ENCODE measurements at regions of chr13 and their contacts with region 1.

Region 1: GRCh38 chr13:30978981-30979956 is 46.8 kb downstream of the TEX26 start:
- DNase-seq: no peak
- H3K4me3 ChIP-seq: no peak overlapping the region
- H3K27ac ChIP-seq: no peak overlapping the region
- H3K4me1 ChIP-seq: peaks cover 20% of the 10 kb centered on the region
- H3K27me3 ChIP-seq: no peaks in the 10 kb centered on the region
- CTCF ChIP-seq: peak; percentile 38 to 86

Region 2: GRCh38 chr13:30679483-30680330 is 299.6 kb before region 1 on chr13:
- CTCF ChIA-PET with region 1: no interaction called
- dilution Hi-C with region 1: no loop called
- in situ Hi-C with region 1: no loop called
- intact Hi-C with region 1: loop called (anchors 1 kb)
- DNase-seq: no peak
- H3K4me3 ChIP-seq: no peak overlapping the region
- H3K27ac ChIP-seq: no peak overlapping the region
- H3K4me1 ChIP-seq: no peaks in the 10 kb centered on the region
- H3K27me3 ChIP-seq: no peaks in the 10 kb centered on the region
- CTCF ChIP-seq: peak; percentile 47 to 78

Region 3: GRCh38 chr13:30905932-30906383 is 73.3 kb before region 1 on chr13 and contains the start of gene MEDAG:
- CTCF ChIA-PET with region 1: no interaction called
- dilution Hi-C with region 1: no loop called
- in situ Hi-C with region 1: no loop called
- intact Hi-C with region 1: no loop called
- DNase-seq: no peak
- H3K4me3 ChIP-seq: peak within 1 kb of the TSS in 1 of 3 experiments; percentile 32
- H3K27ac ChIP-seq: no peak within 1 kb of the TSS
- H3K4me1 ChIP-seq: peaks cover 21% of the 10 kb centered on the region
- H3K27me3 ChIP-seq: peaks cover 12% of the 10 kb centered on the region
- CTCF ChIP-seq: no peak
- total RNA-seq, gene MEDAG: 0.33 TPM in 1 of 2 donors, not detected in the other

Region 4: GRCh38 chr13:30943881-30944280 is 35.4 kb before region 1 on chr13:
- CTCF ChIA-PET with region 1: no interaction called
- dilution Hi-C with region 1: no loop called
- in situ Hi-C with region 1: no loop called
- intact Hi-C with region 1: no loop called
- DNase-seq: no peak
- H3K4me3 ChIP-seq: no peak overlapping the region
- H3K27ac ChIP-seq: no peak overlapping the region
- H3K4me1 ChIP-seq: no peaks in the 10 kb centered on the region
- H3K27me3 ChIP-seq: no peaks in the 10 kb centered on the region
- CTCF ChIP-seq: no peak

Region 5: DNA sequence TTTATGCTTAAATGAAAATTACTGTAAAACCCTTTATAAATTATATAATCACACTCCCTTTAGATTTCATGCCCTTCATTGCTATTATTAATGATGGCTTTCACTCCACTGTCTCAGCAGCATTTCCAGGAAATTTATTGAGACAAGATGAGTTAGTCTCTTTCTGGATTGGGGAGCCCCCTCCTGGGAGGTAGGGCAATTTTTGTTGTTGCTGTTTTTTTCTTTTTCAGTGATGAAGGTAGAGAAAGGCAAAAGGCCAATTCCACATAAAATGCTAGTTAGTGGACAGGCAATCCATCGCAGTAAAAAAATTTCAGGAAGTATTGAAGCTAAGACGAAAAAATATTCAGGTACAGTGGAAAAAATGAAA is 33.4 kb after region 1 on chr13:
- CTCF ChIA-PET with region 1: no interaction called
- dilution Hi-C with region 1: no loop called
- in situ Hi-C with region 1: no loop called
- intact Hi-C with region 1: loop called (anchors 2 kb)
- DNase-seq: no peak
- H3K4me3 ChIP-seq: no peak overlapping the region
- H3K27ac ChIP-seq: no peak overlapping the region
- H3K4me1 ChIP-seq: peaks cover 16% of the 10 kb centered on the region
- H3K27me3 ChIP-seq: no peaks in the 10 kb centered on the region
- CTCF ChIP-seq: peak; percentile 20 to 49

Measured in mammary epithelial cell (primary cell).